MCF 10A (cell line): ENCODE measurements at regions of chr20 and their contacts with region 1.

Region 1: DNA sequence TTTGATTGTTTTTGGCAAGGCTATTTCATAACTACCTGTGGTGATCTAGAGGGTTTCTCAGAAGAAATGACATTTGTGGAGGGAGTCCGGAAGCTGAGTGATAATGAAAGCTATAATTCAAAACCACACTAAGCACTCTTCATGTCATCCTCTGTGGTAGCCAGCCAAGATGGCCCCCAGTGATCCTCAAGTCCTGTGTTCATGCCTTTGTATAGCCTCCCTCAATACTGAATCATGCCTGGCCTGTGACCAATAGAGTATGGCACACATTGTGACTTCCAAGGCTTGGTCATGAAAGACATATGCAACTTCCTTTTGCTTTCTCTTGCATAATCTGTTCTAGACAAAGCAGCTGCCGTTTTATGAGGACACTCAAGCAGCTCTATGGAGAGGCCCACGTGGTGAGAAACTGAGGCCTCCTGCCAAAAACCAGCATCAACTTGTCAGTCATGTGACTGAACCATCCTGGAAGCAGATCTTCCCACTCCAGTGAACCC is 12.8 kb upstream of the DNAAF9 start:
- DNase-seq: peak; percentile 94
- H3K4me3 Mint-ChIP-seq: no peak overlapping the region
- H3K27ac Mint-ChIP-seq: peak overlapping the region; percentile 57
- H3K4me1 Mint-ChIP-seq: peaks cover 8% of the 10 kb centered on the region
- H3K27me3 Mint-ChIP-seq: no peaks in the 10 kb centered on the region
- CTCF ChIP-seq: no peak

Region 2: DNA sequence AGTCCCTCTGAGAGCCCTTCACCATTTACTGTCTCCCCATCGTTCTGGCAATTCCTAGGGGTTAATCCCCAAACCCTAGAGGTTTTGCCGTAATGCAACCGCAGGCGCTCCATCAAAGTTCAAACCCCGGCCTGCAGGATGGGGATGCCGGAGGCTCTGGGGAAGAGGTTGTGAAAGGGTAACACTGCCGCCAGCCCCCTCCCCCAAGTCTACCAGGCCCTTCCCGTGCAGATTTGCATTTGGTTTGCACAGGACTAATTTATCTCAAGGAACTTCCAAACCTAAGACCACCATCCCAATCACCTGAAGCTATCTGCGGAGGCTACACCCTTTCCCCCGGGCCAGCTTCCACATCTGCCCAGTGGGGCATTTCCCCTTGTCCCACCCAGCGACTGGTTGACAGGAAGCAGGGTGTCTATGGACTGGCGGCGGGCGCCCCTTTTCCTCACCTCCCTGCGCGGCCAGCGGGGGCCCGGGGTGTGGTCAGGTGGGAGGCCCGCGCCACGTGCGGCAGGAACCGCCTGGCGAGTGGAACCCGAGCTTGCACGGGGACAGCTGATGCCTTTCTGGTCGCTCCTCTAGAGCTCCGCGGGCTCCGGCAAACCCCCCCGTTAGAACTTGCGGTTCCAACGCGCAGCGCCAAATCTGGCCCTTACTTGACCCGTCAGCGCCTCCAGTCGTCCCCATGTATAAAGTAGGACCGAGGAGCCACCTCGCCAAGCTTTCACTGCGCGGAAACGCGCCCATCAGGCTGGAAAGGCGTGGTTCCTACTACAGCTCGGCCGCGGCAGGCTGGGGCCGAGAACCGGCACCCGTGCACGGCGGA is 171.9 kb before region 1 on chr20:
- CTCF ChIA-PET with region 1: no interaction called
- POLR2A ChIA-PET with region 1: no interaction called
- intact Hi-C with region 1: no loop called
- DNase-seq: no peak
- H3K4me3 Mint-ChIP-seq: no peak overlapping the region
- H3K27ac Mint-ChIP-seq: no peak overlapping the region
- H3K4me1 Mint-ChIP-seq: no peaks in the 10 kb centered on the region
- H3K27me3 Mint-ChIP-seq: no peaks in the 10 kb centered on the region
- CTCF ChIP-seq: no peak

Region 3: DNA sequence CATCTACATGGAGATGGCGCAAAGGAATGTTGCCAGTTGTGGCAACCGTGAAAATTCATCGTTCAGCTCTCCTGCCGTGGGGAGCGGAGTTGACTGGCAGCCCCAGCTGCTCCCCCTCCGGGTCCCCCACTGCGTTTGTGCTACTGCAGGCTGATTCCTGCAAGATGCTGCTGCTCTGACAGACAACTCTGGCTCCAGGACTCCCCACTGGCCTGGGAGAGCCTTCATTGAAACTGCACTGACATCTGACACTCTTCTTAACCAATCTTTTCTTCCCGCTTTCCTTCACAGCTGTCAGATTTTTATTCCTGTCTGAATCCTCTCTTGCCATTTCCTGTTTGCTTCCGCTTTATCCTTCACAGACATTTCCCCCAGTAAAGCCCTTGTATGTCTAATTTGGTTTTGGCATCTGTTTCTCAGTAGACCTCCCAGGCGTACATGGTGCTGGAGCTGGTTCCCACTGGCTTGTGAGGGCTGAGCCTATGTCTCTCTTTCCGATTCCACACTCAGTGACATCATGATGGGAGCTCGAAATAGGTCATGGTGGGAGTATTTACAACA is 41.0 kb after region 1 on chr20:
- CTCF ChIA-PET with region 1: no interaction called
- POLR2A ChIA-PET with region 1: interaction called, 10 read pairs
- intact Hi-C with region 1: no loop called
- DNase-seq: no peak
- H3K4me3 Mint-ChIP-seq: no peak overlapping the region
- H3K27ac Mint-ChIP-seq: no peak overlapping the region
- H3K4me1 Mint-ChIP-seq: no peaks in the 10 kb centered on the region
- H3K27me3 Mint-ChIP-seq: peaks cover 17% of the 10 kb centered on the region
- CTCF ChIP-seq: no peak